A673 (cell line): ENCODE measurements at regions of chr1 and their contacts with region 1.

Region 1: DNA sequence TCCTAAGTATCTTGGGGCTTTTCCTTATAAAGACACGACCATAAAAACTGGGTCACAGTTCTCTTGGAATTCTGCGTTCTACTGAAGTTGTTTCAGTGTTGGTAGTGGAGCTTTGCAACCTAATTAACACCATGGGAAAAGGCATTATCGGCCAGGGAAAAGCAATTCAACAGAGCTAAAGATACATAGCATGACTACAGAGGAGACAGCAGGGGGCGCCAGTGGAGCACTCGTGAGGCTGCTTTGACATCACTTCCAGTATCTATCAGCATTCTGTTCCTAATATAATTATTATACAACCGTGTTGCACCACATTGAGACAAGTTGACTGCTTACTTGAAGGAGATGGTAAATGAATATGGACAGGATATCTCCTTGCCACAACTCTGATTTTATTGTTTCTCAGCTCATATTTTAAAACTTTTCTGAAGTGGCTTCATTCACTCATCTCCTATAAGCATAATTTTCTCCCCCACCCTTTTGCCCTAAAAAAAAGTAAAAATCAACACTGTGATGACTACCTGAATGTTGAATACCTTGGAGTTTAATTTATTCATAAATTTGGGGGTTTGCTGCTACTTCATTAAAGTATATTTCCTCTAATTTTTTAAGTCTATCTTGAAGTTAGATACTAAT is 39.4 kb downstream of the ZP4 start:
- DNase-seq: peak; percentile 65
- H3K4me3 ChIP-seq: no peak overlapping the region
- H3K27ac ChIP-seq: no peak overlapping the region
- H3K4me1 ChIP-seq: no peaks in the 10 kb centered on the region
- H3K27me3 ChIP-seq: no peaks in the 10 kb centered on the region
- CTCF ChIP-seq: peak; percentile 71

Region 2: DNA sequence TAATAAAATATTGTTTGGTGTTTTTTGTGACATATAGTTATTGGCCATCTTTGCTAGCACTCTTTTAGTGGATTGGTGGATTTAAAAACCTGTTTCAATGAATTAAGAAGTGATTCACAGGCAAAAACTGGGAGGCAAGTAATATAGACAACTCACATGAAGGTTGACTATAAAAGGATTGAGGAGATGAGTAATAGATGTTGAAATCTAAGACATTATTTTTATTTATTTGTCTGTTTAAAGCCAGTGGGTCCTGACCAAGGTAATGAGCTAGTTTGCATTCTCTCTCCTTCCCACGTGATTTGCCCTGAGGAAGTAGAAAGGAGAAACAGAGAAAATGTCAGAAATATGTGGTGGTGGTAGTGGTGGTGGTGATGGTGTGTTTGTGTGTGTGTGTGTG is 390.9 kb after region 1 on chr1:
- CTCF ChIA-PET with region 1: no interaction called
- POLR2A ChIA-PET with region 1: no interaction called
- intact Hi-C with region 1: loop called (anchors 10 kb)
- DNase-seq: no peak
- H3K4me3 ChIP-seq: no peak overlapping the region
- H3K27ac ChIP-seq: no peak overlapping the region
- H3K4me1 ChIP-seq: no peaks in the 10 kb centered on the region
- H3K27me3 ChIP-seq: no peaks in the 10 kb centered on the region
- CTCF ChIP-seq: no peak

Region 3: DNA sequence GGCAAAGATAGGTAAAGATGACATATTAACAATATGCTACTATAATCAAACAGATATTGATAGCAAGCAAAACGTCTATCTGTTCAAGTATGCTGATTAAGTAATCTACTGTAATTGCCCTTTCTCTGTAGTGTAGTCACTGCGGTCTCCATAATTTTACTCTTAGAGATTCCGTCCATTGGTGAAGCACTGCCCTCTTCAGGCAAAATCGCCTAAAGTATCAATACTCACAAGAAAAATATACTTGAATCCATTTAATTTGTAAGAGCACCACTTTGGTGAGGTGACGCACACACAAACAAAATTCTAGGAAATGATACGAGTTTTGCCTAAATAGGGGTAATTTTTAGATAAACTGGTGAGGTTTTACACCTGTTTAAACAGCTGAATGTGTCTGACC is 1100.5 kb after region 1 on chr1:
- CTCF ChIA-PET with region 1: no interaction called
- POLR2A ChIA-PET with region 1: no interaction called
- intact Hi-C with region 1: loop called (anchors 5 kb)
- DNase-seq: peak; percentile 20
- H3K4me3 ChIP-seq: no peak overlapping the region
- H3K27ac ChIP-seq: no peak overlapping the region
- H3K4me1 ChIP-seq: no peaks in the 10 kb centered on the region
- H3K27me3 ChIP-seq: no peaks in the 10 kb centered on the region
- CTCF ChIP-seq: peak; percentile 31; the same call in 1 of the 2 replicates